Psoas muscle (tissue), 8 donors: ENCODE measurements at regions of chr6 and their contacts with region 1.

Region 1: GRCh38 chr6:100099189-100100074 is 105.4 kb upstream of the MCHR2 start:
- DNase-seq: no peak
- ATAC-seq: peak in 3 of 4 donors; percentile 44 to 84 (median 67)
- H3K4me3 ChIP-seq: no peak overlapping the region
- H3K27ac ChIP-seq: no peak overlapping the region
- H3K4me1 ChIP-seq: no peaks in the 10 kb centered on the region
- H3K27me3 ChIP-seq: peaks cover 0 to 2% (median 0%) of the 10 kb centered on the region in 3 donors
- CTCF ChIP-seq: peak; percentile 68

Region 2: GRCh38 chr6:98581705-98582104 is 1517.7 kb before region 1 on chr6:
- intact Hi-C with region 1: no loop called
- DNase-seq: no peak
- ATAC-seq: no peak
- H3K4me3 ChIP-seq: no peak overlapping the region
- H3K27ac ChIP-seq: no peak overlapping the region
- H3K4me1 ChIP-seq: no peaks in the 10 kb centered on the region
- H3K27me3 ChIP-seq: no peaks in the 10 kb centered on the region
- CTCF ChIP-seq: no peak

Region 3: DNA sequence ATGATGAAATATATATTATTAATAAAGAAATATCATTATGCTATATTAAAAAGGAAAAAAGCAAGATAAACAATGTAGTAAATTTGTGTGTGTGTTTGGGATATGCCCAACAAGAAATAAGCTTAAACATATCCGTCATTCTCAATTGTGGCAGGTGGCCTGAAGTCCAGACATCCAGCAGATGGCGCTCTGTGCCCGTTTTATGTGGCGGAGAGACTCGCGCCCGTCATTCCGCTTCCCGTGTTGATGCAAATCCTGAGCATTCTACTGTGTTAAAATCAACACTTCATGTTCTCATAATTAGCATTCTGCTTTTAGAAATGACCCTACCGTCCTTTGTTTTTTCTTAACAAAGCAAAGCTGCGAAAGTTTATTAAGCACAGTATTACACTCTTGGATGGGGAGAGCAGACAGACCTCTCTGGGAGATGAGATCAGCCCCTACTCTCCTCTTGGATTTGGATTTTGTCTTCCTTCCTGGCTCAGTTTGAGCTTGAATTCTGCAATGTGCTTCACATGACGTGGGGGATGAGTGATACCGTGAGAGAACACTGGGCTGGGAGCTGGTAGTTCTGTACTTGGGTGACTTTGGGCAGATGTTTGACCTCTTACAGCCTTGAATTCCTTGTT is 231.2 kb before region 1 on chr6:
- intact Hi-C with region 1: loop called (anchors 2 to 5 kb)
- DNase-seq: peak; percentile 63 to 86
- ATAC-seq: peak; percentile 62 to 88 (median 70)
- H3K4me3 ChIP-seq: no peak overlapping the region
- H3K27ac ChIP-seq: no peak overlapping the region
- H3K4me1 ChIP-seq: no peaks in the 10 kb centered on the region
- H3K27me3 ChIP-seq: peaks cover 0 to 2% (median 0%) of the 10 kb centered on the region in 3 donors
- CTCF ChIP-seq: peak; percentile 85

Region 4: DNA sequence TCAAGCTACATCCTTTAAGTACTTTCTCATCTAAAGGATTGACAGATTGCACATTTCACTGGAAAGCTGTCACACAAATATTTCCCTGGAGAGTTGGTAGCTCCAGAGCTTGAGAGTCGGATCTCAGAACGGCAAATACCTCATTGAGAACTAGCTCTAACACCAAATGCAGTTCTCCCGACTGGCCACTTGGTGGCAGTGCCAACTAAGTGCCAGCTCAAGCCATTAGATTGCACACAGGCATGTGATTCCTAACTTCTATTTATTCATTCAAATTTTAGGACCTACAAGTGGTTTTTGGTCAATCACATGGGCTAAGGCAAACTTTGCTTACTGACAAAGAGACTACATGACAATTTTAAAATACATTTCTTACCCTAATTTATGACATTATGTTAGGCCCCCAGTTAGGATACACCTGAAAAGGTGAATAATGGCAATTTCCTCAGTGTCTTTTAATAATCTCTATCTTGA is 97.5 kb before region 1 on chr6:
- intact Hi-C with region 1: loop called (anchors 1 to 2 kb)
- DNase-seq: peak; percentile 31 to 66
- ATAC-seq: peak; percentile 76 to 96 (median 84)
- H3K4me3 ChIP-seq: no peak overlapping the region
- H3K27ac ChIP-seq: no peak overlapping the region
- H3K4me1 ChIP-seq: no peaks in the 10 kb centered on the region
- H3K27me3 ChIP-seq: no peaks in the 10 kb centered on the region
- CTCF ChIP-seq: peak; percentile 94

Region 5: DNA sequence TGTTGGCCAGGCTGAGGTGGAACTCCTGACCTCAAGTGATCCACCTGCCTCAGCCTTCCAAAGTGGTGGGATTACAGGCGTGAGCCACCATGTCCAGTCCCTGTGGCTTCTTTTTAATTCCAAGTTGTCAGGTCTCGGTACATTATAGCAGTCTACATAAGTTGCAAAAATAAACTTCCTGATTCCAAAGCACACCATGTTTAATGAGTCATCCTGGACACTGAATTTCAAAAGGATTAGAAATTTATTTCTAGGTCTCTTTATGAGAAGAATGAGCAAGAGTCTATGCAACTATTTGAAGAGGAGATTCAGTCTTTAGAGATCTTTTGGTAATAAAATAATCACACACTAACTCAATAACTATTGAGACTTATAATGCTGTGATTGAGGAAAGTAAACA is 41.5 kb before region 1 on chr6:
- intact Hi-C with region 1: no loop called
- DNase-seq: no peak
- ATAC-seq: no peak
- H3K4me3 ChIP-seq: no peak overlapping the region
- H3K27ac ChIP-seq: no peak overlapping the region
- H3K4me1 ChIP-seq: no peaks in the 10 kb centered on the region
- H3K27me3 ChIP-seq: no peaks in the 10 kb centered on the region
- CTCF ChIP-seq: no peak

Region 6: GRCh38 chr6:101550451-101550850 is 1451.0 kb after region 1 on chr6:
- intact Hi-C with region 1: no loop called
- DNase-seq: no peak
- ATAC-seq: no peak
- H3K4me3 ChIP-seq: no peak overlapping the region
- H3K27ac ChIP-seq: no peak overlapping the region
- H3K4me1 ChIP-seq: no peaks in the 10 kb centered on the region
- H3K27me3 ChIP-seq: no peaks in the 10 kb centered on the region
- CTCF ChIP-seq: no peak